ENCODE measurements at regions of chr3 and their contacts with region 1.

Region 1: GRCh38 chr3:187738331-187739093 is 6.8 kb downstream of the BCL6 start:
- DNase-seq: peak; percentile 46 to 77 (median 65)
- H3K4me3 ChIP-seq: peak overlapping the region; percentile 81
- H3K4me3 Mint-ChIP-seq: peak overlapping the region; percentile 91 to 99 (median 98)
- H3K27ac ChIP-seq: peak overlapping the region; percentile 68
- H3K27ac Mint-ChIP-seq: peak overlapping the region; percentile 82 to 100 (median 99)
- H3K4me1 ChIP-seq: peaks cover 30% of the 10 kb centered on the region
- H3K4me1 Mint-ChIP-seq: peaks cover 43 to 59% (median 56%) of the 10 kb centered on the region in 3 donors
- H3K27me3 ChIP-seq: no peaks in the 10 kb centered on the region
- H3K27me3 Mint-ChIP-seq: peaks cover 0 to 9% of the 10 kb centered on the region in 2 donors

Region 2: DNA sequence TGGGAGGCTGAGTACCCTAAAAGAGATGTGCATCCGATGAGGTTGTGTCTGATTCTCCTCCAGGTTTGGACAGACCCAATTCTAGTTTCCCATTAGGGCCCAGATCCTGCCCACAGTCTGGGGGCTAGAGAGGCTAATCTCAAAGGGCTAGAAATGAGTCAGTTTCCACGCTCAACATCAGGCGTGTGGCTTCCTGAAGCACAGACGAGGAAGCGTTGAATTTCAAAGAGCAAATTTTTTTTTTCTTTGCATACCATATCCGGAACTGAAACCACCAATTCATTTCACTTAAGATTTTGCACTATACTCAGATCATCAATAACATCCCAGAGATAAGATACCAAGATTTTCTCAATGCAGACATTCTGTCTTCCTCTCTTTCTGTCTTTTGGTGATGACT is 180.5 kb after region 1 on chr3:
- CTCF ChIA-PET with region 1: no interaction called
- POLR2A ChIA-PET with region 1: no interaction called
- DNase-seq: peak; percentile 41 to 77 (median 60)
- H3K4me3 ChIP-seq: peak overlapping the region; percentile 27
- H3K4me3 Mint-ChIP-seq: peak overlapping the region; percentile 73 to 88 (median 83)
- H3K27ac ChIP-seq: peak overlapping the region; percentile 22
- H3K27ac Mint-ChIP-seq: peak overlapping the region; percentile 84 to 97 (median 92)
- H3K4me1 ChIP-seq: peaks cover 23% of the 10 kb centered on the region
- H3K4me1 Mint-ChIP-seq: peaks cover 47 to 77% (median 61%) of the 10 kb centered on the region in 3 donors
- H3K27me3 ChIP-seq: no peaks in the 10 kb centered on the region
- H3K27me3 Mint-ChIP-seq: no peaks in the 10 kb centered on the region

Region 3: GRCh38 chr3:187941135-187941847 is 202.8 kb after region 1 on chr3:
- CTCF ChIA-PET with region 1: interaction called, 11 read pairs
- POLR2A ChIA-PET with region 1: no interaction called
- DNase-seq: no peak
- H3K4me3 ChIP-seq: no peak overlapping the region
- H3K4me3 Mint-ChIP-seq: no peak overlapping the region
- H3K27ac ChIP-seq: no peak overlapping the region
- H3K27ac Mint-ChIP-seq: no peak overlapping the region
- H3K4me1 ChIP-seq: peaks cover 16% of the 10 kb centered on the region
- H3K4me1 Mint-ChIP-seq: peaks cover 8 to 9% (median 8%) of the 10 kb centered on the region in 3 donors
- H3K27me3 ChIP-seq: no peaks in the 10 kb centered on the region
- H3K27me3 Mint-ChIP-seq: peaks cover 0 to 1% of the 10 kb centered on the region in 2 donors

Region 4: GRCh38 chr3:188362405-188362831 is 623.9 kb after region 1 on chr3:
- CTCF ChIA-PET with region 1: interaction called, 28 read pairs
- POLR2A ChIA-PET with region 1: no interaction called
- DNase-seq: peak in 2 of 5 donors; percentile 27 to 45
- H3K4me3 ChIP-seq: no peak overlapping the region
- H3K4me3 Mint-ChIP-seq: peak overlapping the region; percentile 8 to 84 (median 69)
- H3K27ac ChIP-seq: no peak overlapping the region
- H3K27ac Mint-ChIP-seq: peak overlapping the region; percentile 23 to 90 (median 82)
- H3K4me1 ChIP-seq: peaks cover 40% of the 10 kb centered on the region
- H3K4me1 Mint-ChIP-seq: peaks cover 51 to 57% (median 53%) of the 10 kb centered on the region in 3 donors
- H3K27me3 ChIP-seq: no peaks in the 10 kb centered on the region
- H3K27me3 Mint-ChIP-seq: no peaks in the 10 kb centered on the region

Region 5: DNA sequence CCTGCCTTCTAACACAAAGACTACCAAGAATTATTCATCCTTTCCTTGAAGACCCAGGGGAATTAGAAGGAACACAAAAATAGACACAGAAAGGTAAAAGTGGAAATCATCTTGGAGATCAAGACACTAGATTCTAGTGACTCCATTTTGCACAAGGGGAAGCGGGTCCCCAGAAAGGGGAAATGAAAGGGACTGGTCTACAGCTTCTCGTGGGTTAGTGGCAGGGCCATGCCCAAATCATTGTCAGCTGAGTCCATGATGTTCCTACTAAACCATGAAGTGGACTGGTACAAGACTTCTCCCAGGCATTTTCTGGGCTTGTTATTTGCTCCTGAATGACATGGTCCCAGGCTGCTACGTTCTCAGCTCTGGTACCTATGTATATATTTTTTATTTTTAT is 1202.6 kb after region 1 on chr3:
- CTCF ChIA-PET with region 1: interaction called, 11 read pairs
- POLR2A ChIA-PET with region 1: no interaction called
- DNase-seq: no peak
- H3K4me3 ChIP-seq: no peak overlapping the region
- H3K4me3 Mint-ChIP-seq: no peak overlapping the region
- H3K27ac ChIP-seq: no peak overlapping the region
- H3K27ac Mint-ChIP-seq: no peak overlapping the region
- H3K4me1 ChIP-seq: no peaks in the 10 kb centered on the region
- H3K4me1 Mint-ChIP-seq: no peaks in the 10 kb centered on the region
- H3K27me3 ChIP-seq: no peaks in the 10 kb centered on the region
- H3K27me3 Mint-ChIP-seq: peaks cover 2 to 8% of the 10 kb centered on the region in 2 donors

Region 6: GRCh38 chr3:189049438-189050236 is 1311.1 kb after region 1 on chr3:
- CTCF ChIA-PET with region 1: interaction called, 91 read pairs
- POLR2A ChIA-PET with region 1: interaction called, 4 read pairs
- DNase-seq: peak in 1 of 5 donors; percentile 25
- H3K4me3 ChIP-seq: no peak overlapping the region
- H3K4me3 Mint-ChIP-seq: peak overlapping the region; percentile 2 to 72 (median 68)
- H3K27ac ChIP-seq: no peak overlapping the region
- H3K27ac Mint-ChIP-seq: peak overlapping the region; percentile 44 to 95 (median 88)
- H3K4me1 ChIP-seq: peaks cover 4% of the 10 kb centered on the region
- H3K4me1 Mint-ChIP-seq: peaks cover 18 to 28% (median 19%) of the 10 kb centered on the region in 3 donors
- H3K27me3 ChIP-seq: no peaks in the 10 kb centered on the region
- H3K27me3 Mint-ChIP-seq: peaks cover 0 to 1% of the 10 kb centered on the region in 2 donors

Region 7: DNA sequence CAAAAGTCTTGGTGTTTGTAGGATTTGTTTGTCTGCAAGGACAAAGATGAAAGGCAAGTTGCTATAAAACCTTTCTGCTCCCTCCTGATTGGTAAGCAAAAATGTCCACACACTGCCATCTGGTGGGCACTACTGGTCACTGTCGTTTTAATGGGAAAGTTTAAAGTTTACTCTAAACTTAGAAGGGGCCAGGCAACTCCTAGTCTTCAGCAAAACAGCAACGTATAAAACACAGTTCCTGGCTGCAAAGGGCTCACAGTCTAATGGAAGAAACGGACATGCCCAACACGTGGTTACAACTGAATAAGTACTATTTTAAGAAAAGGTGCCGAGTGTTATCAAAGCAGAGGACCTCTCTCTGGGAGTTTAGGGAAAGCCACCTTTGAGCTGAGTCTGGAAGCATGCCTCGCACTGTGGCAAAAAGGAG is 1409.6 kb after region 1 on chr3:
- CTCF ChIA-PET with region 1: interaction called, 117 read pairs
- POLR2A ChIA-PET with region 1: interaction called, 3 read pairs
- DNase-seq: peak; percentile 43 to 73 (median 53)
- H3K4me3 ChIP-seq: no peak overlapping the region
- H3K4me3 Mint-ChIP-seq: no peak overlapping the region
- H3K27ac ChIP-seq: no peak overlapping the region
- H3K27ac Mint-ChIP-seq: peak overlapping the region in 2 of 8 donors; percentile 5 to 9
- H3K4me1 ChIP-seq: peaks cover 18% of the 10 kb centered on the region
- H3K4me1 Mint-ChIP-seq: peaks cover 16 to 32% (median 25%) of the 10 kb centered on the region in 3 donors
- H3K27me3 ChIP-seq: no peaks in the 10 kb centered on the region
- H3K27me3 Mint-ChIP-seq: peaks cover 0 to 3% of the 10 kb centered on the region in 2 donors

Measured in CD8-positive, alpha-beta memory T cell (primary cell).